H1 (cell line): ENCODE measurements at regions of chr1 and their contacts with region 1.

Region 1: GRCh38 chr1:214551436-214552173 is at the start of gene PTPN14:
- DNase-seq: peak; percentile 87 to 88
- H3K4me3 ChIP-seq: peak within 1 kb of the TSS; percentile 80 to 99 (median 92)
- H3K27ac ChIP-seq: peak within 1 kb of the TSS; percentile 99
- H3K4me1 ChIP-seq: peaks cover 5 to 18% (median 10%) of the 10 kb centered on the region in 4 experiments; a peak in 6 of 7 replicates
- H3K27me3 ChIP-seq: no peaks in the 10 kb centered on the region
- CTCF ChIP-seq: peak; percentile 29 to 38 (median 30); a peak in 3 of 4 replicates
- EP300 ChIP-seq: peak in 1 of 2 experiments; percentile 85; a peak in 1 of 3 replicates
- POLR2A ChIP-seq: peak; percentile 2 to 94; a peak in 2 of 3 replicates
- RAD21 ChIP-seq: peak in 1 of 2 experiments; percentile 30; a peak in 1 of 4 replicates
- total RNA-seq, gene PTPN14: 77.4 and 93.6 TPM in 2 replicates

Region 2: DNA sequence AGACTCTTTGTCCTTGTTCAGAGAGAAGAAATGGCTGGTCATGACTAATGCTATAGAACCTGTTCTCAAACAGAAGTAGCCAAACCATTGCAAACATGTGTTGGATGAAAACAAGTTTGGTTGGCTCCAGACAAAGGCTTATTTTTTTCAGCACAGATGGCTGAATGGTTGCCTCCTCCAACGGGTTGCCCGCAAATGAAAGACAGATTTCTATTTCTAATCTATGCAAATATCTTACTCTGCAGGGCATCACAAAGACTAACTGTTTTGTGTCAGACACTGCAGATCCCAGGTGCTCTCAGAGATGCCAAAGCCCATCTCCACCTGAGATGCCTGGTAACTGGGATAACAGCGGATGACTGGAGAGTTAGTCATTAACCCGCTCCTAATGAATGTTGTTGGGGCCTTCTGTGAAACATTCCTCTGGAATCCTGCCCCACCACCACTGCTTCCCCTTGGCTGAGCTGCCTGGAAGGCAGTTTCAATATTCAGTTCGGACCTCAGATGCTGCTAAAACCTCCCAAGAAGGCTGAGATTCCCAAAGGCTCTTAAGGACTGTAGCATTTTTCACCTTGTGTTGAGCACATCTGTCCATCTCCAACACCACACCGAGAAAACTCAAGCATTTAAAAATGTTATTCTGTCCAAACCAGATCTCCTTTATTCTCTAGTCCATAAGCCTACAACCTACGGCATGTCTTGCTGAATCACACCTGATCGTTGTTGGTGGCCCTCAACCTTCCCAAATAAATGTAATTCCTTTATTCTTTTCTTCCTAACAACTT is 104.6 kb before region 1 on chr1:
- CTCF ChIA-PET with region 1: interaction called, 5 read pairs
- POLR2A ChIA-PET with region 1: interaction called, 30 read pairs
- DNase-seq: peak; percentile 62 to 82
- H3K4me3 ChIP-seq: peak overlapping the region in 1 of 4 experiments; percentile 29; a peak in 2 of 8 replicates
- H3K27ac ChIP-seq: peak overlapping the region; percentile 86
- H3K4me1 ChIP-seq: peaks cover 1 to 25% (median 9%) of the 10 kb centered on the region in 4 experiments; a peak in 5 of 7 replicates
- H3K27me3 ChIP-seq: no peaks in the 10 kb centered on the region
- CTCF ChIP-seq: no peak
- EP300 ChIP-seq: peak in 1 of 2 experiments; percentile 85; a peak in 1 of 3 replicates
- POLR2A ChIP-seq: peak; percentile 65 to 91
- RAD21 ChIP-seq: peak in 1 of 2 experiments; percentile 18; a peak in 1 of 4 replicates

Region 3: DNA sequence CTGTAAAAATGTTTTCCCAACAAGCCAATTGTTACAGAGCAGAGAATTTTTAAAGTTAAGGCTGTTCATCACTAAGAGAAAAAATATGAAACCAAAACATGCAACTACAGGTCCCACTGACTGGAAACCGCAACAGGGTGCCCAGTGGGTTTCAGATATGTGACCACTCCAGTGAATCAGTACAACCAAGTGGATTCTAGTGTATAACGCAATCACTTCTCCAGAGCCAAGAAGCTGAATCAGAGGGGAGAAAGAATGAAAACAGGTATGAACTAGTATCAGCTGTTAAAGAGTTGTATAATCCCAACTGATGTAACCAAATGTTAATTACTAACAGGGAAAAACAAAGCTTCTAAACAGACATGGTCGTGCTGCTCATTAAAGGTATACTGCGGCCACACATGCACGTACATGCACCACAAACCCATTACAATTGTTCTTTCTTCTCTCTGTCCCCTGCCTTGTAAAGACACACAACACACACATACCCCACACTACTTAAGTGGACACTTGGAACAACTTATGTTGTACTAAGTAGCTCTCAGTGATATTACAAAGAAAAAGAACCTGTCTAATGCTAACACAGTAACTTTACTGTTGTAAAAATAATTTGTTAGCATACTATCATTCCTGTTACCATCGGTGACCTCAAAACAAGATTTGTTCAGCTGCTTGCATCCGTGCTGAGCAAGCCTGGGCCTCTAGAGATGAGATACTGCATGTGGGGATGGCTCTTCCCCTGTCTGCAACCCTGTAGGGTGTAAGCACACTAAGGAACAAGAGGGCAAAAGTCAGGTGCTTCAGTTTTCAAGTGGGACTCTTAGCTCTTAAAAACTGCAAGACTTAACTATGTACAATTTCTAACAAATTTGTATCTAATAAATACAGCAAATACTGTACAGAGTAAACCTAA is 74.4 kb before region 1 on chr1:
- CTCF ChIA-PET with region 1: no interaction called
- POLR2A ChIA-PET with region 1: interaction called, 25 read pairs
- DNase-seq: no peak
- H3K4me3 ChIP-seq: no peak overlapping the region
- H3K27ac ChIP-seq: no peak overlapping the region
- H3K4me1 ChIP-seq: peaks cover 0 to 20% (median 10%) of the 10 kb centered on the region in 4 experiments; a peak in 5 of 7 replicates
- H3K27me3 ChIP-seq: no peaks in the 10 kb centered on the region
- CTCF ChIP-seq: no peak
- EP300 ChIP-seq: no peak
- POLR2A ChIP-seq: no peak
- RAD21 ChIP-seq: no peak

Region 4: GRCh38 chr1:214525535-214526019 is 26.0 kb before region 1 on chr1:
- CTCF ChIA-PET with region 1: interaction called, 12 read pairs
- POLR2A ChIA-PET with region 1: interaction called, 14 read pairs
- DNase-seq: no peak
- H3K4me3 ChIP-seq: no peak overlapping the region
- H3K27ac ChIP-seq: no peak overlapping the region
- H3K4me1 ChIP-seq: peaks cover 0 to 3% (median 1%) of the 10 kb centered on the region in 4 experiments; a peak in 1 of 7 replicates
- H3K27me3 ChIP-seq: no peaks in the 10 kb centered on the region
- CTCF ChIP-seq: no peak
- EP300 ChIP-seq: no peak
- POLR2A ChIP-seq: no peak
- RAD21 ChIP-seq: no peak

Region 5: DNA sequence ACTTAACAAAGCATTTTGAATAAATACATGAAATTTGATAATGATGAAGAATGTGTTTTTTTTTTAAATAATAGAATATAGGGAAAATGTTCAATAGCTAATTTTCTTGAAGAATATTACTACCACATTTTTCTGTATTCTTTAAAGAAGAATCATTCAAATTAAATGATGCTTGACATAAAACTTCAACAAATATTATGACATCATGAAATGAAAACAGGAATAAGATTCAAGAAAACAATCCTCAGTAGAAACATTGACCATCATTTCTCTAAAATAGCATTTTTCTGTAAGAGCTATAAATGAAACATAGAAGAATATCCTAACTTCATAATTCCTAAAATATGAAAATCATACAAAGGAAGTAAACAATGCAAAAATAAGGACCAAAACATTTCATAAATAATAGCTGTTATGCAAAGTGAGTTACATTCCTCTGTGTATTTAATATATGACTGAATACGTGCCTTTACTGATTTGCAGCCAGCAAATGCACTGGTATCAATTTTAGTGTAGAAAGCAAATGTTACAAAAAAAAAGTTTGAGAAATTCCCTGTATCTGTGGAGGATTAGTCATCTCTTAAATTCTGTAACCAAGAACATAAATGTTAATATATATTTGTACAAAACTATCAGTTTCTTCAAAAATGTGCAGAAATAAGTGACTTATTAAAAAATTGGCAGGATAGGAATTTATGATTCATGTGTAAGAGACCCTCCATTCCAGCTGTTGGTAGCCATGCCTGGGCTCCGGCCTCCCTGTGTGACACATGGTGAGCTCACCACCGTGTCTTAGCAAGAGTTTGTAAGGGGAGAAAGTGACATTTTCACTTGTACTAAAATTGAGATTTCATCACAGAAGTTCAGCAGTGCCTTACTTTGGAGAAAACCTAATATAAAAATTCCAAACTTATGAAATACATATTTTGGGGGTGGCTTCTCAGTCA is 14.8 kb after region 1 on chr1:
- CTCF ChIA-PET with region 1: interaction called, 7 read pairs
- POLR2A ChIA-PET with region 1: interaction called, 70 read pairs
- DNase-seq: no peak
- H3K4me3 ChIP-seq: no peak overlapping the region
- H3K27ac ChIP-seq: no peak overlapping the region
- H3K4me1 ChIP-seq: no peaks in the 10 kb centered on the region
- H3K27me3 ChIP-seq: no peaks in the 10 kb centered on the region
- CTCF ChIP-seq: no peak
- EP300 ChIP-seq: no peak
- POLR2A ChIP-seq: no peak
- RAD21 ChIP-seq: no peak

Region 6: GRCh38 chr1:214584805-214585766 is 33.5 kb after region 1 on chr1:
- CTCF ChIA-PET with region 1: interaction called, 54 read pairs
- POLR2A ChIA-PET with region 1: interaction called, 69 read pairs
- DNase-seq: no peak
- H3K4me3 ChIP-seq: no peak overlapping the region
- H3K27ac ChIP-seq: no peak overlapping the region
- H3K4me1 ChIP-seq: peaks cover 3 to 9% (median 7%) of the 10 kb centered on the region in 4 experiments; a peak in 5 of 7 replicates
- H3K27me3 ChIP-seq: no peaks in the 10 kb centered on the region
- CTCF ChIP-seq: peak in 2 of 3 experiments; percentile 57 to 70; a peak in 2 of 4 replicates
- EP300 ChIP-seq: no peak
- POLR2A ChIP-seq: no peak
- RAD21 ChIP-seq: peak; percentile 83 to 91